Left cardiac atrium (tissue), 4 donors: ENCODE measurements at regions of chr13 and their contacts with region 1.

Region 1: GRCh38 chr13:102596147-102597028 is at the start of gene TPP2:
- DNase-seq: peak; percentile 100
- ATAC-seq: peak; percentile 98
- total RNA-seq, gene TPP2: 33.0 to 39.1 TPM

Region 2: DNA sequence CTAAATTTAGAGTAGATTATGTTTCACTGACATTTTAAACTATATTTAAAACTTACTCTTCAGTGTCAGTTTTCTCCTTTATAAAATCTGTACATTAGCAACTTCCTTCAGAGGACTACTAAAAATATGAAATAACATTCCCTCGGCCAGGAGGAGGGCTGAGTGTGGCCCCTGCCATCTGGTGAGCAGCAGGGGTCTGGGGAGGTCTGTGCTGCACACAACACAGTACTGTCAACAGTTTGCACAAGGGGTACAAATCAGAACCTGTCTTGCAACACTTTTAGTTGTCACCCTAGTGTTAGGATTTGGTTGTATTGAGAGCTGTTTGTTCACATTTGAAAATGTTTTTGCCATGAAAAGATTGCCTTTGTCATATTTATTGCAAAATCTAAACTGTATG is 49.3 kb after region 1 on chr13:
- intact Hi-C with region 1: loop called in 1 of 2 experiments (anchors 5 kb)
- DNase-seq: no peak
- ATAC-seq: no peak

Region 3: GRCh38 chr13:102742101-102742500 is 145.7 kb after region 1 on chr13:
- intact Hi-C with region 1: no loop called
- DNase-seq: no peak
- ATAC-seq: no peak

Region 4: DNA sequence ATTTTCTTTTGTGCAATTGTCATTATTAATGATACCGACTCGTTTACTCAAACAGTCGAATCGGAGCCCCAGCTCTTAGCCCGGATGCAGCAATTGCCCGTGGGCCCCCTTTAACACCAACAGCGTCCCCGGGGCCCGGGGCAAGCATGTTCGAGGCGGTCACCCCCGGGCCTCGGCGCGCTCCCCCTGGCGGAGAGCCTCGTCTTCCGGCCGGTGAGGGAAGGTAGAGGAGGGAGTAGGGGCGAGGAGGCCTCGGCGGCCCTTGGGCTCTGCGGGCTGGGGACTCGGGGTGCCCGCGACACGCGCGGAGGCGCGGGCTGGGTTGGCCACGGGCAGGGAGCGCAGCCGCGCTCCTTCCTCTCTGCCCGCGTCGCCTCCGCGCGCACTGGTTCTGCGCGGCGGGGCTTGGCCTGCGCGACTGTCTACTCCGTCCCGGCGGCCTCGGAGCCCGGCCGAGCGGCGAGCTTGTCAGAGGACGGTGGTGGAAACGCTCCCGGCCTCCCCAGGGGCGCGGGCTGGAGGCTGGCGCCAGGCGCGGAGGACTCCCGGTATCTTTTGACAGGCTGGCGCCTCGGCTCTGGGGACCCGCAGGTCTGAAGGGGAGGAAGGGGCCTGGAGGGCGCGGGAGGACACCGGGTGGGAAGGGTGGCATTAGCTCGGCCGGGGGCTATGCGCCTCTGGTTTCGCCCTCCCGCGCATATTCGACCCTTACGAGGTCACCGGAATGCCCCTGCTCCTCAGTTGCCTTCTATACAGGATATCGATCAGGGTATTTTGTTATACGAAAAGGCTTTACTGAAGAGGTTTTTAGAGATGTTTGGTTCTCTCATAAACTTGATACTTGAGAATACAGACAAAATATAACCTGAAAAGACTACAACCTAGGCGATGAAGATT is 204.0 kb after region 1 on chr13:
- intact Hi-C with region 1: loop called in 1 of 2 experiments (anchors 10 kb)
- DNase-seq: peak; percentile 83
- ATAC-seq: peak; percentile 85 to 88